ENCODE measurements at regions of chr3 and their contacts with region 1.

Region 1: GRCh38 chr3:119463171-119464169 is at the start of gene TMEM39A:
- DNase-seq: peak; percentile 98
- H3K4me3 Mint-ChIP-seq: peak within 1 kb of the TSS; percentile 96
- H3K27ac Mint-ChIP-seq: peak within 1 kb of the TSS; percentile 90
- H3K4me1 Mint-ChIP-seq: peaks cover 32% of the 10 kb centered on the region
- H3K27me3 Mint-ChIP-seq: no peaks in the 10 kb centered on the region
- total RNA-seq, gene TMEM39A: 21.4 to 26.9 TPM

Region 2: GRCh38 chr3:119098619-119099222 is 364.7 kb before region 1 on chr3:
- CTCF ChIA-PET with region 1: no interaction called
- intact Hi-C with region 1: no loop called
- DNase-seq: no peak
- H3K4me3 Mint-ChIP-seq: no peak overlapping the region
- H3K27ac Mint-ChIP-seq: no peak overlapping the region
- H3K4me1 Mint-ChIP-seq: no peaks in the 10 kb centered on the region
- H3K27me3 Mint-ChIP-seq: no peaks in the 10 kb centered on the region

Region 3: GRCh38 chr3:119293871-119294695 is 169.4 kb before region 1 on chr3 and contains the start of gene ARHGAP31:
- CTCF ChIA-PET with region 1: no interaction called
- intact Hi-C with region 1: loop called (anchors 1 kb)
- DNase-seq: peak; percentile 94
- H3K4me3 Mint-ChIP-seq: peak within 1 kb of the TSS; percentile 82
- H3K27ac Mint-ChIP-seq: peak within 1 kb of the TSS; percentile 92
- H3K4me1 Mint-ChIP-seq: peaks cover 36% of the 10 kb centered on the region
- H3K27me3 Mint-ChIP-seq: no peaks in the 10 kb centered on the region
- total RNA-seq, gene ARHGAP31: 3.5 to 3.7 TPM

Region 4: GRCh38 chr3:119401503-119402372 is 61.7 kb before region 1 on chr3:
- CTCF ChIA-PET with region 1: no interaction called
- intact Hi-C with region 1: loop called (anchors 2 kb)
- DNase-seq: no peak
- H3K4me3 Mint-ChIP-seq: no peak overlapping the region
- H3K27ac Mint-ChIP-seq: peak overlapping the region; percentile 27
- H3K4me1 Mint-ChIP-seq: peaks cover 10% of the 10 kb centered on the region
- H3K27me3 Mint-ChIP-seq: no peaks in the 10 kb centered on the region

Region 5: GRCh38 chr3:119559441-119559963 is 96.0 kb after region 1 on chr3 and contains the start of gene CD80:
- CTCF ChIA-PET with region 1: no interaction called
- intact Hi-C with region 1: loop called (anchors 1 kb)
- DNase-seq: peak; percentile 81
- H3K4me3 Mint-ChIP-seq: no peak within 1 kb of the TSS
- H3K27ac Mint-ChIP-seq: no peak within 1 kb of the TSS
- H3K4me1 Mint-ChIP-seq: peaks cover 10% of the 10 kb centered on the region
- H3K27me3 Mint-ChIP-seq: no peaks in the 10 kb centered on the region
- total RNA-seq, gene CD80: 0.14 to 0.40 TPM

Region 6: DNA sequence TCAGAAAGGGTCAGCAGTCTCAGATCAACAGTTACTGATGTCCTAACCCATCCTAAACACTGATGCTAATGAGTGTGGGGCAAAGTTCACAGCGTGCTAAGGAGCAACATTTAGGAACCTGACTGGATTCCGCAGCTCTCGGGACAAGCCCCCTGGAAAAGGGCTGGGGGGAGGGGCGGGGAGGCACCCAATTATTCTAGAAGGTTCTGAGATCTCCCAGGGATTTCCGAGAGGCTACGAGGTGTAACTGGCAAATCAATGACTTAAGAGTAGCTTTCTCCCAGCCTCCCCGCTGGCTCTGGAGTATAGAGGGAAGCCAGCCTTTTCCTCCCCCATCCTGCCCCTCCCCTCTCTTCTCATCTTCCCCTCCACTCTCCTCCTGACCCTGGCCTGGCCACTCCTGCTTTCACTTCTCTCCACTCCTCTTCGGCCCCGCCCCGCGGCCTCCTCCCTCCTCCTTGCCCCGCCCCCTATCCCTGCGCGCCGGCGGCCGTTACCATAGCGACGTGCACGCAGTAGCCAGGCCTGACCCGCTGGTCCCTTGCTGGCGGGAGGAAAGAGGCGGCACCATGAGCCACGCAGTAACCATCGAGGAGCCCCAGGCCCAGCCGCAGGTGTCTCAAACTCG is 239.2 kb after region 1 on chr3 and contains the start of gene CFAP91:
- CTCF ChIA-PET with region 1: no interaction called
- intact Hi-C with region 1: loop called (anchors 1 kb)
- DNase-seq: peak; percentile 83
- H3K4me3 Mint-ChIP-seq: peak within 1 kb of the TSS; percentile 72
- H3K27ac Mint-ChIP-seq: no peak within 1 kb of the TSS
- H3K4me1 Mint-ChIP-seq: peaks cover 45% of the 10 kb centered on the region
- H3K27me3 Mint-ChIP-seq: peaks cover 2% of the 10 kb centered on the region
- total RNA-seq, gene CFAP91: 0.26 to 0.57 TPM

Measured in activated naive CD4-positive, alpha-beta T cell treated with anti-CD3 and anti-CD28 coated beads for 36 hours (primary cell).